Activated CD4-positive, alpha-beta T cell treated with anti-CD3 and anti-CD28 coated beads for 36 hours (primary cell): ENCODE measurements at regions of chr15 and their contacts with region 1.

Region 1: GRCh38 chr15:80455668-80456442 is 51.7 kb downstream of the ARNT2 start:
- DNase-seq: peak; percentile 74
- ATAC-seq: peak; percentile 73
- H3K4me3 Mint-ChIP-seq: no peak overlapping the region
- H3K27ac Mint-ChIP-seq: no peak overlapping the region
- H3K4me1 Mint-ChIP-seq: no peaks in the 10 kb centered on the region
- H3K27me3 Mint-ChIP-seq: peaks cover 9% of the 10 kb centered on the region

Region 2: DNA sequence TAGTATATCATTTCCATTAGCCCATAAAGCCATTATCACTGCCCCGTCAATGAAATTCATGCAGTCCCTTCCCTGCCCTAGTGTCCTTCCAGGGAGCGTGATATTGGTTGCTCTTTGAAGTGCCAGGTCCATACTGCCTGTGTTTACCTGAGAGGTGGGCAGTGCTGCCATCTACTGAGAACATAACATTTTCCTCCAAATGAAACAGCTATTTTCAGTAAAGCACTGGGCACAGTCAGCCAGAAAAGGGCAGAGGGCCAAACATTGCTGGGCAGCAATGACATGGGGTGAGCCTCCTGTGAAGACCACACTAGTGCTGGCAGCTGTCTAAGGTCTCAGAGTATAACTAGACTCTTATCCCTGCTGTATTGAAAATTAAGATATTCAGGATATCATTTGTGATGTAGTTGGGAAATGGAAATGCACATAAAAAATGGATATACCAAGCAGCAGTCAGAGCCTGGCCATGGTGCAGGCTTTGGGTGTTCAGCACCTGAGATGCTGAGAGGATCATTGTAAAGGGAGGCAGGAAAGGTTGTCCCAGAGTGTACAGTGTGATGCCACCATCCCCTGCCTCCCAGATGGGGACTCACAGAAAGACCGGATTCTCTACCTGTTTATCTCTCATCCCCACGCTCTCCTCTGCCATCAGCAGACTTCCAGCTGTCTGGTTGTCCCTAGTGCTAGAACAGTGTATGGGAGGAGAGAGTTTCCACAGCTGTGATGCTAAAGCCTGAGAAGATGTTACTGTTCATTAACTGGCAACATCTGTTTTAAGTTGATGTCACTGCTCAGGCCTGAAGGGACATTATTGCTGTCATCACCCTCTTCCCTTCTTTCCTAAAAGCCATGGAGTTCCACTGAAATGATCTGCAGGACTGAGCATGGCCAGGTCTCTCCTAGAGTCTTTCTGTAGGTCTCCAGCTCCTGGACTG is 57.1 kb after region 1 on chr15:
- CTCF ChIA-PET with region 1: no interaction called
- POLR2A ChIA-PET with region 1: no interaction called
- intact Hi-C with region 1: loop called (anchors 1 to 5 kb)
- DNase-seq: peak; percentile 8
- ATAC-seq: no peak
- H3K4me3 Mint-ChIP-seq: no peak overlapping the region
- H3K27ac Mint-ChIP-seq: no peak overlapping the region
- H3K4me1 Mint-ChIP-seq: peaks cover 10% of the 10 kb centered on the region
- H3K27me3 Mint-ChIP-seq: peaks cover 2% of the 10 kb centered on the region

Region 3: GRCh38 chr15:80567721-80568157 is 111.9 kb after region 1 on chr15:
- CTCF ChIA-PET with region 1: interaction called, 4 read pairs
- POLR2A ChIA-PET with region 1: no interaction called
- intact Hi-C with region 1: loop called (anchors 2 to 10 kb)
- DNase-seq: peak; percentile 39
- ATAC-seq: peak; percentile 57
- H3K4me3 Mint-ChIP-seq: no peak overlapping the region
- H3K27ac Mint-ChIP-seq: no peak overlapping the region
- H3K4me1 Mint-ChIP-seq: peaks cover 9% of the 10 kb centered on the region
- H3K27me3 Mint-ChIP-seq: peaks cover 7% of the 10 kb centered on the region